CD14-positive monocyte (primary cell): ENCODE measurements at regions of chr6 and their contacts with region 1.

Region 1: DNA sequence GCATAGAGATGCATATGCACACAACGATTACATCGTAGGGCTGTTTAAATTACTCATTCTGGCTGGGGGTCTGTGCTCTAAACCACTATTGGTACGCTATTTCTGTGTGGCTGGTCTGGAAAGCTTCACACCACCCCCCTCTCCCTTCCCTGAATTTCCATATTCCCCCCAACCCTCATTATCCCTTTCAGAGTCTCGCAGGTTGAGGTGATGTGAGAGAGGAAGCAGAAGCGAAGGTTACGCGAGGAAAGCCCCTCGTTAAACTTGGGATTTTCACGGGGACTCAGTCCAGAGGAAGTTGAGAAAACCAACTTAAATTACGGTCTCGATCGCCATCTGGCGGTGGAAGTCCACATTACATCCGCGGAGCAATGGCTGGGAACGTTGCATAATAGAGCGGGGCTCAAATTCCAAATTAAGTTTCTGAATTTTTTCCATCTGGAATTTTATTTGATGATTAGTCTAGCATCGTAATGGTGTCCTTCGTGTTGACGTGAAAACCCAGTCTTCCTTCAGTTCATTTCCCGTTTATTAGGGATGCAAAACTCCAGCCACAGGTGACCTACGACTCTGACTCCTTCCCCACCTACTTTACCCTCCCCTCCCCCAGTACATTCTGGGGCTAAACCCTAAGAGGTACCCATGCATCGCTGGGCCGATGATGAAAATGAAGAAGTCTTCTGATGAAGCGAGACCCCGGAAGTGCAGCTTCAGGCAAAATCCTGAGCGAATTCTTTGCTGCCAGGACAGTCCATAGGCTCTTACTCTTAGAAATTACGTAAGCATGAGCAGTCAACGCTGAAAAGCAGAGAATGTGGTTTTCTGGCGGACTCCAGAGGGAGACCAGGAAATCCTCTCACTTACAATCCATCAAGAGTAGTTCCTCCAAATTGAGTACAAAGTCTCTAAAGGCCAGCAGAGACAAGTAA is 19.7 kb downstream of the HLA-DOB start:
- DNase-seq: peak; percentile 65 to 88 (median 76)
- H3K4me3 ChIP-seq: peak overlapping the region; percentile 0 to 69 (median 31)
- H3K4me3 Mint-ChIP-seq: peak overlapping the region; percentile 72 to 93
- H3K27ac ChIP-seq: peak overlapping the region; percentile 8 to 42
- H3K27ac Mint-ChIP-seq: peak overlapping the region; percentile 62 to 90 (median 87)
- H3K4me1 ChIP-seq: peaks cover 43 to 46% of the 10 kb centered on the region in 2 donors
- H3K4me1 Mint-ChIP-seq: peaks cover 43% of the 10 kb centered on the region
- H3K27me3 ChIP-seq: peaks cover 0 to 5% of the 10 kb centered on the region in 2 donors
- H3K27me3 Mint-ChIP-seq: peaks cover 0 to 4% (median 3%) of the 10 kb centered on the region in 3 donors
- CTCF ChIP-seq: peak; percentile 92

Region 2: GRCh38 chr6:32244946-32245398 is 552.1 kb before region 1 on chr6:
- intact Hi-C with region 1: loop called in 1 of 2 experiments (anchors 10 kb)
- DNase-seq: peak; percentile 55 to 77 (median 61)
- H3K4me3 ChIP-seq: peak overlapping the region in 1 of 3 experiments; percentile 24
- H3K4me3 Mint-ChIP-seq: peak overlapping the region in 1 of 2 donors; percentile 77
- H3K27ac ChIP-seq: no peak overlapping the region
- H3K27ac Mint-ChIP-seq: peak overlapping the region in 1 of 7 donors; percentile 44
- H3K4me1 ChIP-seq: peaks cover 8% of the 10 kb centered on the region in 2 donors
- H3K4me1 Mint-ChIP-seq: peaks cover 9% of the 10 kb centered on the region
- H3K27me3 ChIP-seq: no peaks in the 10 kb centered on the region
- H3K27me3 Mint-ChIP-seq: peaks cover 2 to 7% (median 4%) of the 10 kb centered on the region in 3 donors
- CTCF ChIP-seq: peak; percentile 92

Region 3: DNA sequence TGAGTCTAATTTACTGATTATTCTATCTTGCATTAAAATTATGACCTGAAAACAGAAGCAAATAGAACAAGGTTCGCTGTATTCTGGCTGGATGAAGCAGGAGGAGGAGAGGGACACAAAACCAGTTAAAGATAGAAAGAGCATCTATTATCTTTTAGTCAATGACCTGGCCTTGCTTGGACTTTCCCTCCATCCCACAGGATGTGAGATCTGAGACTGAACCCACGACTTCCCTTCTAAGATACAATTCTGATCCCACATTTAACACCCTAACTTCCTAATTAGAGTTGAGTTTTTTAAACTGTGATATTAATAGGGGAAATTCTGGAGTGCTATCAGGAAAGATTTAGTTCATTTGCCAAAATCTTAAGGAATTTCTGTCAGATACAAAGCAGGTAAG is 59.0 kb before region 1 on chr6:
- intact Hi-C with region 1: no loop called
- DNase-seq: no peak
- H3K4me3 ChIP-seq: no peak overlapping the region
- H3K4me3 Mint-ChIP-seq: no peak overlapping the region
- H3K27ac ChIP-seq: no peak overlapping the region
- H3K27ac Mint-ChIP-seq: no peak overlapping the region
- H3K4me1 ChIP-seq: no peaks in the 10 kb centered on the region
- H3K4me1 Mint-ChIP-seq: no peaks in the 10 kb centered on the region
- H3K27me3 ChIP-seq: peaks cover 0 to 2% of the 10 kb centered on the region in 2 donors
- H3K27me3 Mint-ChIP-seq: peaks cover 3 to 11% (median 10%) of the 10 kb centered on the region in 3 donors
- CTCF ChIP-seq: no peak